ENCODE measurements at regions of chr2 and their contacts with region 1.

Region 1: DNA sequence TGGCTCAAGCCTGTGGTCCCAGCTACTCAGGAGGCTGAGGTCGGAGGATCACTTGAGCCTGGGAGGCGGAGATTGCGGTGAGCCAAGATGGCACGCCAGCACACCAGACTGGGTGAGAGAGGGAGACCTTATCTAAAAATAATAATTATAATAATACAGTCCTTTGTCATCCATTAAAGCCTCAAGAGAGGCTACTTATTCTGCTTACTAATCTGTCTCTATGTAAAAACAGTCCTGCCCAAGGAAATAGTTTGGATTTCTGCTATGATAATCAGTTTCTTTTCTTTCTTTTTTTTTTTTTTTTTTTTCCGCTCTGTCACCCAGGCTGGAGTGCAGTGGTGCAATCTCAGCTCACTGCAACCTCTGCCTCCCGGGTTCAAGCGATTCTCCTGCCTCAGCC is 228.3 kb downstream of the C1D start:
- DNase-seq: no peak
- H3K4me3 ChIP-seq: no peak overlapping the region
- H3K27ac ChIP-seq: no peak overlapping the region
- H3K4me1 ChIP-seq: no peaks in the 10 kb centered on the region
- H3K27me3 ChIP-seq: no peaks in the 10 kb centered on the region
- CTCF ChIP-seq: no peak
- POLR2A ChIP-seq: no peak

Region 2: DNA sequence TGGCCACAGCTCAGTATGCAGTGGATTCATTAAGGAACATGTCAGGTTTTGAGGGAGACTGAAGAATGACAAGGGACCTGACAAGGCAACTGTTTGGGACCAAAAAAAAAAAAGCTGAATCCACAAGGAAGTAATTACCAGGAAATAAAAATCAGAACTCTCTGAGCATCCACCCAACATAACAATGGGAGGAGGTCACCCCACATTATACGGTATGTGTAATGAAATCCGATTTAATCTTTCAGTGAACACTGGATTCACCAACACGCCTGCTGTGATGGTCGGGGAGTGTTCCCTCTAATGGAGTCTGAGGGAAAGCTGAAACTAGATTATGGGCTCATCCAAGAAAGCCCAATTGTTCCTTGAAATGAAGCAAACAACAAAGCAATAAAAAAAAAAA is 108.1 kb before region 1 on chr2:
- intact Hi-C with region 1: loop called in 1 of 2 experiments (anchors 5 kb)
- DNase-seq: no peak
- H3K4me3 ChIP-seq: no peak overlapping the region
- H3K27ac ChIP-seq: no peak overlapping the region
- H3K4me1 ChIP-seq: no peaks in the 10 kb centered on the region
- H3K27me3 ChIP-seq: no peaks in the 10 kb centered on the region
- CTCF ChIP-seq: no peak
- POLR2A ChIP-seq: no peak

Measured in adrenal gland (tissue), 19 donors.